Esophagus muscularis mucosa (tissue), 4 donors: ENCODE measurements at regions of chr11 and their contacts with region 1.

Region 1: DNA sequence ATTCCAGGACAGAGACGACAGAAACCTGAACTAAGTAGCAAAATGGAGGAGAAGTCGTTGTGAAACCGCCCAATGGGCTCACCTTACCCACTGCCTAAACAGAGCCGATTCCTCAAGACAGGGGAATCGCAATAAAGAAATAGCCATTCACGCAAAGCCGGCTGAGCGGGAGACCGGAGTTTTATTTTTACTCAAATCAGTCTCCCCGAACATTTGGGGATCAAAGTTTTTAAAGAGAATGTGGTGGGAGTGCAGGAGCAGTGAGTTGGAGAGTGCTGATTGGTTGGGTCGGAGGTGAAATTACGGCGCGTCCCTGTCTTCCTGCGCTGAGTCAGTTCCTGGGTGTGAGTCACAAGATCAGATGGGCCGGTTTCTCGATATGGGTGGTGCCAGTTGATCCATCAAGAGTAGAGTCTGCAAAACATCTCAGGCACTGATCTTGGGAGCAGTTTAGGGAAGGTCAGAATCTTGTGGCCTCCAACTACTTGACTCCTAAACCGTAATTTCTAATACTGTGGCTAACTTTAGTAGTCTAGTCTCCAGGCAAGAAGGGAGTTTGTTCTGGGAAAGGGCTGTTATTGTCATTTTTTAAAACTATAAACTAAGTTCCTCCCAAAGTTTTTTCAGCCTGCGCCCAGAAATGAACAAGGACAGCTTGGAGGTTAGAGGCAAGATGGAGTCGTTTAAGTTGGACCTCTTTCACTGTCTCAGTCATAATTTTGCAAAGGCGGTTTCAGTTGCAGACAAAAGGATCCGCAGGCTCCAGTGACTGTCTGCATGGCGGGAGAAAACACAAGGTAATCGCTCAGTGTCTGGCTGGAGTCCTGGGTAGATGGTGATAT is 34.1 kb downstream of the OR4D9 start:
- DNase-seq: no peak
- H3K4me3 ChIP-seq: no peak overlapping the region
- H3K27ac ChIP-seq: no peak overlapping the region
- H3K4me1 ChIP-seq: peaks cover 0 to 9% (median 7%) of the 10 kb centered on the region in 4 donors
- H3K27me3 ChIP-seq: no peaks in the 10 kb centered on the region
- CTCF ChIP-seq: no peak
- EP300 ChIP-seq: no peak
- POLR2A ChIP-seq: no peak

Region 2: GRCh38 chr11:59463190-59463641 is 82.2 kb before region 1 on chr11:
- intact Hi-C with region 1: no loop called
- DNase-seq: no peak
- H3K4me3 ChIP-seq: no peak overlapping the region
- H3K27ac ChIP-seq: no peak overlapping the region
- H3K4me1 ChIP-seq: peaks cover 0 to 3% (median 0%) of the 10 kb centered on the region in 4 donors
- H3K27me3 ChIP-seq: no peaks in the 10 kb centered on the region
- CTCF ChIP-seq: no peak
- EP300 ChIP-seq: no peak
- POLR2A ChIP-seq: no peak

Region 3: DNA sequence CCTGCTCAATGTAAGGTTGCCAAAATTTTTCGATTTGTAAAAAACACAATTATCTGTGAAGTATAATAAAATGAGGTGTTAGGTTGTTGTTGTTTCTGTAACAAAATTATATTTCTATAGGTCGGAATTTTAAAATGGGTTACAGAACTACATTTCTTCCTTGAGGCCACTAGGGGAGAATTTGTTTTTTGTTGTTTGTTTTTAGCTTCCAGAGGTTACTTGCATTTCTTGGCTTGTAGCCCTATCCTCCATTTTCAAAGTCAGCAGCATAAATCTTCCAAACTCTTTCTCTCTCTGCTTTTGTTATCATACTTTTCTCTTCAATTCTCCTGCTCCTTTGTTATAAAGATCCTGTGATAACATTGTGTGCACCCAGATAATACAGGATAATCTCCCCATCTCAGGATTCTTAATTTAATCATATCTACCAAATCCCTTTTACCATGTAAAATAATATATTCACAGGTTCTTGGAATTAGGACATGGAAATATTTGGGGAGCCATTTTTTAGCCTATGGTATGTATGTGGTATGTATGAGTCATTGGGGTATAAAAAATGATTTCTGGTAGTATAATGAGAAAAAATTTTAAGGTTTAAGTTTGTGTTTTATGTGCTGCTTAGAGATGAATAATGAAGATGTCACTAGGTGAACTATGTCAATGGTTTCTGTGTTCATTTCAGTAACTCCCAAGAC is 132.9 kb after region 1 on chr11:
- intact Hi-C with region 1: loop called (anchors 5 kb)
- DNase-seq: no peak
- H3K4me3 ChIP-seq: no peak overlapping the region
- H3K27ac ChIP-seq: no peak overlapping the region
- H3K4me1 ChIP-seq: no peaks in the 10 kb centered on the region
- H3K27me3 ChIP-seq: no peaks in the 10 kb centered on the region
- CTCF ChIP-seq: no peak
- EP300 ChIP-seq: no peak
- POLR2A ChIP-seq: no peak